Calu3 (cell line): ENCODE measurements at regions of chr7 and their contacts with region 1.

Region 1: DNA sequence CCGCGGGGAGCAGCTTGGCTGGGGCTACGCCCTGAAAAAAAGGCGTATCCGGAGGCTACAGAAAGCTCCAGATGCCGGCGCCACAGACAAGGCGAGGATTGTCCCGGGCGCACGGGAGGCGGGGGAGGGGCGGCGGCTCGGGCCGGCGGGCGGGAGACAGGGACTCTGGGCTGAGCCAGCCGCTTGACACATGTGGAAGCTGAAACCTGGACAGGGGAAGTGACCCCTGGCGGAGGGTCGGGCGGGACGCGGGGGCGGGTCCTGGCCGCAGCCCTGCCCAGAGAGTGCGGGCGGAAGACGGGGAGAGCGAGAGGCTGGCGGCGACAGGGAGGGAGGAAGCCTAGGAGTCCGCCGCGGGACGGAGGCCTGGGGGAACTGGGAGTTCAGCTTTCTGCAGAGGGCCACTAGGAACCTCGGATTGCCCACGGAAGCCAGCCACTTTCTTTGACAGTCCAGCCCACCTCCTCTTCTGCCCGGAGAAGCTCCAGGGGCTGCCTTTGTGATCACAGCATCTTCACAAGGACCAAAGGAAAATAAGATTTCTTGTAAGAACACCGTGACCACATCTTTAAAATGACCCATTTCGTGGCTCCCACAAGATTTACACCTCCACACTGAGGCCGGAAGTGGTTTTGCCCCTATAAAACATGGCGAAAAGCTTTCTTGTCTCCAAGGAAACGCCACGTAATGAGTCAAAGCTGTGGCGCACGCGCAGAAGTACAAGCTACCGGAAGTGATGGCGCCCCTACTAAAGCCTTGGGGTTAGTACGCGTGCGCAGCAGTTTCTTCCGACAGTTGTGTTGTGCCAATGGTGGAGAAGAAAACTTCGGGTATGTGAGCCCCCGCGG is at the starts of genes PLOD3 and ZNHIT1:
- DNase-seq: peak; percentile 85
- H3K4me3 Mint-ChIP-seq: peak within 1 kb of the TSS; percentile 80
- H3K27ac Mint-ChIP-seq: peak within 1 kb of the TSS; percentile 89
- H3K4me1 Mint-ChIP-seq: peaks cover 18% of the 10 kb centered on the region
- H3K27me3 Mint-ChIP-seq: no peaks in the 10 kb centered on the region
- CTCF ChIP-seq: peak; percentile 15
- total RNA-seq, gene PLOD3: 103 and 108 TPM in 2 replicates
- total RNA-seq, gene ZNHIT1: 57.2 and 57.5 TPM in 2 replicates

Region 2: DNA sequence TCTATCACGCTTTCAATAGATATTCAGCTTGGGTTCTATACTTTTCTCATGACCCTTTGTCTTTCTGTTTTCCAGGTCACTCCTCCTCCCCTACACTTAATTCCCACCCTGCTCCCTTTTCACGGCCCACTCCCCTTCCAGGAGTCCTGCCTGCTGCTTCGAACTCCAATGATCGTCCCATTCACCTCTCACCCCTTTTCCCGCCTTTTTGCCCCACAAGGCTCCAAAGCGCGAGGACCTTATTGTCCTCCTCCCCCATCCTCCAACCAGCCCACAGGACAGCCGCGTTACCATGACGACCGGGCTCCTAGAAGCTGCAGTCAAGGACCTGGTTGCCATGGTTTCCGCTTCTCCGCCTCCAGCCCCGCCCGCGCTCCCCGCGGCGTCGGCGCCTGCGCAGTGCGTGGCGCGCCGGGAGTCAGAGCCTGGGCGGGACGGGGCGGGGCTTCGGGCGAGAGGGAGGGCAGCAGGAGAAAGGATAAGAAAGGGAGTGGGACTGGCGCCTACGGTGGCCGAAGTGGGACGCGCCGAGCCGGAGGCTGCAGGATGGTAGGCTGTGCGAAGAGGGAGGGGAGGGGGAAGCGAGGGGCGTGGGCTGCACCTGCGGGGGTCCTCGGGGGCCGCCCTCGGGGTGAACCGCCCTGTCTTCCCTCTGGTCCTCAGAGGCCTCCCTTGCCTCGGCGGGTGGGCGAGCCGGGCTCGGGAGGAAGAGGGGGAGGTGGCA is 63.5 kb before region 1 on chr7 and contains the start of gene AP1S1:
- CTCF ChIA-PET with region 1: no interaction called
- intact Hi-C with region 1: no loop called
- DNase-seq: peak; percentile 86
- H3K4me3 Mint-ChIP-seq: peak within 1 kb of the TSS; percentile 58
- H3K27ac Mint-ChIP-seq: peak within 1 kb of the TSS; percentile 60
- H3K4me1 Mint-ChIP-seq: peaks cover 7% of the 10 kb centered on the region
- H3K27me3 Mint-ChIP-seq: no peaks in the 10 kb centered on the region
- CTCF ChIP-seq: no peak
- total RNA-seq, gene AP1S1: 45.6 and 61.6 TPM in 2 replicates

Region 3: GRCh38 chr7:101197991-101198390 is 19.6 kb before region 1 on chr7:
- CTCF ChIA-PET with region 1: interaction called, 13 read pairs
- intact Hi-C with region 1: no loop called
- DNase-seq: no peak
- H3K4me3 Mint-ChIP-seq: no peak overlapping the region
- H3K27ac Mint-ChIP-seq: no peak overlapping the region
- H3K4me1 Mint-ChIP-seq: no peaks in the 10 kb centered on the region
- H3K27me3 Mint-ChIP-seq: peaks cover 25% of the 10 kb centered on the region
- CTCF ChIP-seq: no peak

Region 4: DNA sequence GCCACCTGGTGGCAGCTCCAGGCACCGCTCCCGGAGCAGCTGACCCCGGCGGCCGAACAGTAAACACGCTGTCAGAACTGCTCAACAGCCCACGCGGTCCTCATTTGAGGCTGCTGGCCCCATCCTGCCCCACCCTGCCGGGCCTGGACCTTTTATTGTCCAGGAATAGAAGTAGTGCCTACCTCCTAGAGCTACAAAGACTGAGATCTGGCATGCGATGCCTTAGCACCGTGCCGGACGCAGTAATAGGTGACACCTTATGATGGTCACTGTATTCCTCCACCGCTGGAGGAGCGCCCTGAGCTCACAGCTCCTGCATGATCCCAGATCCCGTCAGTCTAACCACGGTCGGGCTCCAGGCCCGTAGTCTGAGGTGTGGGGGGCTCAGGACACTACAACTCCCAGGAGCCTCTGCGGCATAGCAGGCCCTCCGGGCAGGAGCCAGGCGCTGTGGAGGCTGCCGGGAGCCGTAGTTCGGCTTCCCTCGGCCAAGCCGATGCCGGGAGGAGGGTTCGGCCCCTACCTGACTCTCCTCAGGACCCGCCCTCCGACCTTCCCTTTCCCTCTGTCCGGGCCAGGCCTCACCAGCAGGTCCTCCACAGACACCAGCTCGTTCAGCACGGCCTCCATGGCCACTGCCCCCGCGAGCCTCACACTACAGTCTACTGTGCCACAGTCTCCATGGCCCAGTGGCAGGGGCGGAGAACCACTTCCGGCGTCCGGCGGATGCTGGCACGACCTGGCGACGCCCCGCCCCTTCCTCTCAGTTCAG is 26.9 kb after region 1 on chr7 and contains the start of gene FIS1:
- CTCF ChIA-PET with region 1: interaction called, 19 read pairs
- intact Hi-C with region 1: no loop called
- DNase-seq: peak; percentile 90
- H3K4me3 Mint-ChIP-seq: peak within 1 kb of the TSS; percentile 97
- H3K27ac Mint-ChIP-seq: peak within 1 kb of the TSS; percentile 91
- H3K4me1 Mint-ChIP-seq: no peaks in the 10 kb centered on the region
- H3K27me3 Mint-ChIP-seq: no peaks in the 10 kb centered on the region
- CTCF ChIP-seq: peak; percentile 66
- total RNA-seq, gene FIS1: 83.8 and 90.0 TPM in 2 replicates

Region 5: DNA sequence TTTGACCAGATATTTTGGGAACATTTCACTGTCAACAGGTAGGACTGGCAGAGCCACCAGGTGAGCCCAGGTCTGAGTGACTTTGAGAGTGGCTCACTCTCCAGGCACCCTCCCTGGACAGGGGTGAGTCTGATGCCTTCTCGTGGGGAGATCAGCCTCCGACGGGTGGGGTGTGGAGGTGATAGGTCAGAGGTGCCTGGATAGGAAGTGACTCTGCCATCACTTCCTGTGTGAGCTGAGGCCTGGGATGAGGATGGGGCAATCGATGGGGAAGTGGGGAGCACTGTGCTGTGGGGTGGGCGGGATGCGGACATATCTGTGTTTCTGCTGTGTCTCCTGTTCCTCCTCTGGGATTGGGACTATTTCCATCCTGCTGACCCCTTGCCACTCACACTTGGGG is 69.4 kb after region 1 on chr7:
- CTCF ChIA-PET with region 1: interaction called, 14 read pairs
- intact Hi-C with region 1: no loop called
- DNase-seq: no peak
- H3K4me3 Mint-ChIP-seq: no peak overlapping the region
- H3K27ac Mint-ChIP-seq: no peak overlapping the region
- H3K4me1 Mint-ChIP-seq: no peaks in the 10 kb centered on the region
- H3K27me3 Mint-ChIP-seq: peaks cover 62% of the 10 kb centered on the region
- CTCF ChIP-seq: no peak

Region 6: GRCh38 chr7:101941481-101942383 is 724.1 kb after region 1 on chr7:
- CTCF ChIA-PET with region 1: no interaction called
- intact Hi-C with region 1: no loop called
- DNase-seq: peak; percentile 36
- H3K4me3 Mint-ChIP-seq: no peak overlapping the region
- H3K27ac Mint-ChIP-seq: no peak overlapping the region
- H3K4me1 Mint-ChIP-seq: peaks cover 11% of the 10 kb centered on the region
- H3K27me3 Mint-ChIP-seq: no peaks in the 10 kb centered on the region
- CTCF ChIP-seq: no peak